HCT116 (cell line): ENCODE measurements at regions of chr6 and their contacts with region 1.

Region 1: GRCh38 chr6:47787620-47788497 is 6.0 kb downstream of the OPN5 start:
- DNase-seq: peak; percentile 58
- ATAC-seq: peak; percentile 96
- H3K4me3 ChIP-seq: 0 out of 4 replicates have a peak overlapping the region, but pooled peaks of 1 of the 2 experiments have one; percentile 1
- H3K27ac ChIP-seq: no peak overlapping the region
- H3K4me1 ChIP-seq: peaks cover 0 to 6% of the 10 kb centered on the region in 2 experiments; a peak in 1 of 4 replicates
- H3K27me3 ChIP-seq: no peaks in the 10 kb centered on the region
- CTCF ChIP-seq: peak; percentile 76 to 92 (median 83); a peak in 5 of 6 replicates
- POLR2A ChIP-seq: no peak
- RAD21 ChIP-seq: peak; percentile 98

Region 2: GRCh38 chr6:48073976-48074767 is 286.3 kb after region 1 on chr6:
- CTCF ChIA-PET with region 1: no interaction called
- POLR2A ChIA-PET with region 1: no interaction called
- RAD21 ChIA-PET with region 1: no interaction called
- intact Hi-C with region 1: loop called (anchors 5 kb)
- DNase-seq: no peak
- ATAC-seq: no peak
- H3K4me3 ChIP-seq: no peak overlapping the region
- H3K27ac ChIP-seq: no peak overlapping the region
- H3K4me1 ChIP-seq: no peaks in the 10 kb centered on the region
- H3K27me3 ChIP-seq: no peaks in the 10 kb centered on the region
- CTCF ChIP-seq: no peak
- POLR2A ChIP-seq: no peak
- RAD21 ChIP-seq: no peak

Region 3: GRCh38 chr6:48765352-48765961 is 977.6 kb after region 1 on chr6:
- CTCF ChIA-PET with region 1: interaction called, 27 read pairs
- POLR2A ChIA-PET with region 1: no interaction called
- RAD21 ChIA-PET with region 1: interaction called, 8 read pairs
- intact Hi-C with region 1: loop called (anchors 1 kb)
- DNase-seq: peak; percentile 59
- ATAC-seq: peak; percentile 87
- H3K4me3 ChIP-seq: no peak overlapping the region
- H3K27ac ChIP-seq: no peak overlapping the region; the same call in 1 of the 2 replicates
- H3K4me1 ChIP-seq: peaks cover 5 to 22% of the 10 kb centered on the region in 2 experiments; a peak in 3 of 4 replicates
- H3K27me3 ChIP-seq: no peaks in the 10 kb centered on the region
- CTCF ChIP-seq: peak; percentile 56 to 73 (median 66)
- POLR2A ChIP-seq: no peak
- RAD21 ChIP-seq: peak; percentile 86

Region 4: GRCh38 chr6:49423817-49424216 is 1636.0 kb after region 1 on chr6:
- CTCF ChIA-PET with region 1: interaction called, 7 read pairs
- POLR2A ChIA-PET with region 1: no interaction called
- RAD21 ChIA-PET with region 1: no interaction called
- intact Hi-C with region 1: loop called (anchors 1 kb)
- DNase-seq: no peak
- ATAC-seq: no peak
- H3K4me3 ChIP-seq: no peak overlapping the region
- H3K27ac ChIP-seq: no peak overlapping the region
- H3K4me1 ChIP-seq: no peaks in the 10 kb centered on the region
- H3K27me3 ChIP-seq: no peaks in the 10 kb centered on the region
- CTCF ChIP-seq: peak; percentile 9 to 49 (median 31); a peak in 3 of 6 replicates
- POLR2A ChIP-seq: no peak
- RAD21 ChIP-seq: peak; percentile 65